Activated CD4-positive, alpha-beta T cell treated with anti-CD3 and anti-CD28 coated beads, Interleukin-2, amount 10 ng/mL, durations not matched to agents 7 days and 5 days (primary cell): ENCODE measurements at regions of chr17 and their contacts with region 1.

Region 1: GRCh38 chr17:2282297-2282873 is 21.2 kb downstream of the SMG6 start:
- DNase-seq: no peak
- H3K4me3 Mint-ChIP-seq: no peak overlapping the region
- H3K27ac Mint-ChIP-seq: peak overlapping the region; percentile 11
- H3K4me1 Mint-ChIP-seq: peaks cover 53% of the 10 kb centered on the region
- H3K27me3 Mint-ChIP-seq: no peaks in the 10 kb centered on the region

Region 2: GRCh38 chr17:2237521-2237921 is 44.9 kb before region 1 on chr17:
- CTCF ChIA-PET with region 1: no interaction called
- POLR2A ChIA-PET with region 1: no interaction called
- DNase-seq: no peak
- H3K4me3 Mint-ChIP-seq: no peak overlapping the region
- H3K27ac Mint-ChIP-seq: no peak overlapping the region
- H3K4me1 Mint-ChIP-seq: peaks cover 60% of the 10 kb centered on the region
- H3K27me3 Mint-ChIP-seq: no peaks in the 10 kb centered on the region

Region 3: DNA sequence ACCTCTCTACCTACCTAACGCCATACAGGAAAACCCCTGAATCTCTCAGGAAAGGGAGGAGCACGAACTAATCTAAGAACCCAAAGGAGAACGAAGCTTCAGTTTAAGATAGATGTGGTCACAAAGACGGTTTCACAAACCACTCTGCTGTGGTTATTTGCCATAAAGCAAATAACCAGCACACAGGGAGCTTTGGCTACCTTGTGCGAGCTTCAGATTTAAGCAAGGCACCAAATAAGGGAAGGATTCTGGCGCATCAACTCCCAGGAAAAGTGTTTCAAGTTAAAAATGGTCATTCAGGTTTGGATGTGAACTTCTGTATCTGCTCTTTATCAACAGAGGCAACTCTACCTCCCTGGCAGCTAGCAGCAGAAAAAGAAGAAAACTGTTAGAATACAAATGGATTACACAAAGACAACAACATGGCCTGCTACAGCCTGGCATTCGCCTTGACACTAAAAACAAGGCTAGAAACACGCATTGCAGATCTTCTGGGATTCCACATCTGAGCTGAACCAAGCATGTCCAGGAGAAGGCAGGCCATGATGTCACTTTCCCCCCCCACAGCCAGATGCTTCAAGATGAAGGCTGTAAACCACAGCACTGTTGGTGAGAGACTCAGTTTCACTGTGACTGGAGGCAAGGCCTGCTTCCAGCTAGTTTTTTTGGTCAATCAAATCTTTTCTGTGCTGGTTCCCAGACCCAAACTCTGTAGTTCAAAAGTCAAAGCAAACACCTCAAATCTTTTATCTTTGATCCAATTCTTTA is 22.4 kb before region 1 on chr17:
- CTCF ChIA-PET with region 1: interaction called, 14 read pairs
- POLR2A ChIA-PET with region 1: no interaction called
- DNase-seq: peak; percentile 85
- H3K4me3 Mint-ChIP-seq: peak overlapping the region; percentile 77
- H3K27ac Mint-ChIP-seq: peak overlapping the region; percentile 91
- H3K4me1 Mint-ChIP-seq: peaks cover 82% of the 10 kb centered on the region
- H3K27me3 Mint-ChIP-seq: no peaks in the 10 kb centered on the region

Region 4: DNA sequence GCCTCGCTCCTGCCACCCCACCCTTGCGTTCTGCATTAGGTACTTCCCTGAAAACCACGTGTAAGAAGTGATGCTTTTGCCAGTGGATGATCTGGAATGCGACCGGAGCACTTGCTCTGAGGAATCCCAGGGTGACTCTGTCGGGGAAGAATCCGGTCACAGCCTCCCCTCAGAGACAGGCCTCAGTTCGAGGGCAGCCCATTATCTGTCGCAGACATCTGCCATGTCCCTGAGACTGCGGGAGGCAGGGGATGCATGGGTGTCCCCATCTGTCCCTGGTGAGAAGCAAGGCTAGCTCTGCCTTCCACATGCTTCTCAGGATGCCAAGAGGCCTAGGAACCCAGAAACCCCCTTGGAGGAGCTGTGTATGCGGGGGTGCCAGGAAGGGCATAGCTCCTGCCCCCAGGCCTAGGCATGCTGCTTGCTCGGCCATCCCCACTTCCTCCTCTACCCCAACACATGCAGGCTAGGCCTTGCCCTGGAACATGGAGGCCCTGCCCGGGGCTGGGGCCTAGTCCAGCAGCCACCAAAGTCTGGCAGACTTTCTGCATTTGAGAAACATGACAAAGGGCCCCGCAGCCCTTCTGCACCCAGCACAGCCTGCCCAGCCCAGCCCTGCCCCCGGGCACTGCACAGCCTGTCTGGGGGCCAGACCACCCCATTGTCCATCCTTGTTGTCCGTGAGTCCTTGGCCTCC is 98.0 kb after region 1 on chr17:
- CTCF ChIA-PET with region 1: no interaction called
- POLR2A ChIA-PET with region 1: no interaction called
- DNase-seq: no peak
- H3K4me3 Mint-ChIP-seq: no peak overlapping the region
- H3K27ac Mint-ChIP-seq: no peak overlapping the region
- H3K4me1 Mint-ChIP-seq: peaks cover 5% of the 10 kb centered on the region
- H3K27me3 Mint-ChIP-seq: no peaks in the 10 kb centered on the region